Posterior cingulate gyrus (tissue), 11 donors: ENCODE measurements at regions of chr12 and their contacts with region 1.

Region 1: GRCh38 chr12:66717036-66717673 is 38.3 kb upstream of the GRIP1 start:
- DNase-seq: no peak

Region 2: DNA sequence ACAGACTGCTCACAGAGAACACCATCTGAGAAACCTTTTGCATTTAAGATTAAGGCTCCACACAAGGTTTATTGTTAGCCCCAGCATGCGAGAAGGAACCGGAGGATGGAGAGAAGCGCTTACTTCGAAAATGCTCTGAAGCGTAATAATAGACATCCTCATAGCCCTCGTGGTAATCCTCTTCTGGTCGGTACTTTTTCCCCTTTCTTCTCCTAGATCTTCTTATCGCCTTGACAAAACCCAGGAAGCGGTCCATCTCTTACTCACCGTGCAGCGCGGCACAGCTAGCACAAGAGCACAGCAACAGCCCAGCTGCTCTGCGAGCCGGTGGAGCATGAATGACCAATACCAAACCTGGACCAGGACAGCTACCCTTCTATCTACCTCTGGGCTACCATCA is 86.8 kb after region 1 on chr12:
- intact Hi-C with region 1: no loop called
- DNase-seq: peak in 8 of 10 donors; percentile 15 to 91 (median 46)

Region 3: DNA sequence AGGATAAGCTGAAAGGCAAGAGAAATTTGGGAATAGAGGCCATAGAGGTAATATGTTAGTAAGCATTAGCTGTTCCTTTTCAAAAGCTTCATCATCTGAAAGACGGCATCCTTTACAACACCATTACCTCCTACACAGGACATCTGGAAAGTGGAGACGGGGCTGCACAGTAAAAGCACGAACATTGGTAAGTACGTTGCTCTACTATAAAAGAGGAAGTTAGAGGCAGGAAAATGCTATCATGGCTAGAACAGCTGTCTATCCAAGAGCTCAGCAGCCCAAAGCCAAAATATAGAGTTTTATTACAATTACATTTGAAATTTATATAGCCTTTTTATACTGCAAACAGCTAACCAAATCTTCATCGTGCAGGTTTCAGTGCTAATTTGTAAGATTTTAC is 134.0 kb after region 1 on chr12:
- intact Hi-C with region 1: loop called (anchors 10 kb)
- DNase-seq: no peak